Activated T-helper 1 cell treated with anti-CD3 and anti-CD28 coated beads, Interleukin-12 subunit alpha, Interleukin-12 subunit beta, Interleukin-2, Interleukin-4 antibody, amounts not matched to agents 30 ng/mL and 10 ng/mL and 1 ng/mL, durations not matched to agents 14 hours and 24 hours and 36 hours (primary cell): ENCODE measurements at regions of chr11 and their contacts with region 1.

Region 1: DNA sequence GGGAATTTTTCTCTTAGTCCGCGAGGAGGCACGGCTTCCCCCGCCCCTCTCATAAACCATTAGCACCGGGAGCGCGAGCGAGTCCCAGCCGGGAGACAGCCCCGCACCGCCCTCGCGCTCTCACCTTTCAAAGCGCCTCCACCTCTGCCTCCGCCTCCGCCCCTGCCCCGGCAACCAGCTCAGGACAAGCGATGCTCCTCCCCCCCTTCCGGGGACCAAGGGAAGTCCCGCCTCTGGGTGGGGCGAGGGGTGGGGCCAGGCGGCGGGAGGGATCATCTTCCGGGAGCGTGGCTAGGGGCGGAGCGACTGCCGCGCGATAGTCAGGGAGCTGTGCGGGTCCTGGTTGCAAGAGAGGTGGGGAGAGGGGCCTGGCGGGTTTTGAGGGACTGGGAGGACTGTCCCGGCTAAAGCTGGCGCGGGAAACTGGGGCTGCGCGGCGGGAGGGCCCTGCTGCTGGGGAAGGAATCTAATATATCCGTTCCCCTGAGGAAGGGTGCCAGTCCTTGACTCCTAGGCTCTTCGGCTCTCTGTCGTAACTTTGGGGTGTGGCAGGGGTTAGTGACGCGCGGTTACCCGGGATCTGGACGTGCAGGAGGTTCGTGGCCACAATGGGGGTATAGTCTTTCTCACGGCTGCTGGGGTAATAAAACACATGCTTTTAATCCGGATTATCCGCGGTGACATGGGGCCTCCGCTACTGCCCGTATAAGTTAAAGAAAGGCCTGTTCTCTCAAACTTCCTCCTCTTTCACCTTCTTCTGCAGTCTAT is at the starts of genes CCDC82 and JRKL:
- DNase-seq: peak; percentile 97
- H3K4me3 Mint-ChIP-seq: peak within 1 kb of the TSS; percentile 95
- H3K27ac Mint-ChIP-seq: peak within 1 kb of the TSS; percentile 85
- H3K4me1 Mint-ChIP-seq: peaks cover 64% of the 10 kb centered on the region
- H3K27me3 Mint-ChIP-seq: no peaks in the 10 kb centered on the region
- total RNA-seq, gene CCDC82: 28.5 and 29.9 TPM in 2 replicates
- total RNA-seq, gene JRKL: 9.6 and 10.2 TPM in 2 replicates

Region 2: DNA sequence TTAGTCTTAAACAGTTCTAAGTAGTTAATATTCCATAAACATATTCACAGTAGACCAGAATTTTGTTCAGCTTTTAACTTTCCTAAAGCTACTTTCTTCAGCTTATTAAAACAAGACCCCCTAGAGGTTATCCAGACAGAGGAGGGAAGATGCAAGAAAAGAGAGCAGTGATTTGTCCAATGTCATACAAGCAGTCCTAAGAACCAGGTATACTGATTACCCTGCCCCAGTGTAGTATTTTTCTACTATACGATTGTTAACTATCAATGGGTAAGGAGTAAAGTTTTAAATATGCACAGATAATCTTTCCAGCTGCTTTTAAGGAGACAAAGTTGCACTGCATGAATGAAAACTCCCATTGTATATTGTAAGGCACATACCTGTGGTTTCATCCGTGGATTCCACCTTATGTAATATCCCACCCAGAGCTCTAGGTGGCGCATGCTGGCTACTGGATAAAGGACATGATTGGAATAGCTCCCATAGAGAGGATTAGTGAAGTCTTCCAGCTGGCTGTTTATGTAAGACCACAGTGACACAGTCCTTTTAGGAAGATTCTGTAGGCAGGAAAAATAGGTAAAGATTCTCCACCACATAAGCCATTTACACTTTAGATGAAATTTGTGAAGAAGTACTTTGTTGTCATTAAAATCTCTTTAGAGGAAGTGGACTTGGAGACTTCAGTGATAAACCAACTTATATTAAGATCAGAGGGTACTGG is 554.0 kb before region 1 on chr11:
- intact Hi-C with region 1: loop called (anchors 1 kb)
- DNase-seq: peak; percentile 29
- H3K4me3 Mint-ChIP-seq: no peak overlapping the region
- H3K27ac Mint-ChIP-seq: peak overlapping the region; percentile 0
- H3K4me1 Mint-ChIP-seq: no peaks in the 10 kb centered on the region
- H3K27me3 Mint-ChIP-seq: no peaks in the 10 kb centered on the region

Region 3: DNA sequence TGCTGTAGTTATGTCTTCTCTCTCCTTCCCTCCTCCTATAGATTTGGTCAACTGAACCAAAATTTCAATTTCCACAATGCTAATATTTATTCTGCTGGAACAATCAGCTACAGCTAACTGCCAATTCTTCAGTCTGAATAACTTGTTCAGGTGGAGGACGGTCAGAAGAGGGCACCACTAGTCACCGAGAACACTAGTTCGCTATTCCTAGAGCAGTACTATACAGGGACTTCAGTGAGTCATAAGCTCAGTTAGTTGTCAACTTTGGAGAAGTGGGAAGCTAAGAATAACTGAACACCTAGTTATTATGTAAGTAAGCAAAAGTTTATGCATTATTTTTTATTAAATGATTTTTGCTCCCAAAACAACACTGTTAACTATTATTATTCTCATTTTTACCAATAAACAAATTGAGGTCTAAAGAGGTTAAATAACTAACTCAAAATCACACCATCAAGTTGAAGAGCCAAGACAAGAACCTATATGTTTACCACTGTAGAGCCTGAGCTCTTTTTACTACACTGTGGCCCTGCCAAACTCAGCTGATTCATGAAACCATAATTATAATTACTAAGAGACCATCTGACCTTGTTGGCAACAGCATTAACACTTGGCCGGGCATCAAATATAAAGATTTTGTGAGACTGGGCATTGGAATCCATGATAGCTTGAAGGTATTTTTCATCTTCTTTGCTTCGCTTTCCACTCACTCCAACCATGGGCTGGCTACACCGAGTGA is 540.6 kb before region 1 on chr11:
- intact Hi-C with region 1: loop called (anchors 1 kb)
- DNase-seq: no peak
- H3K4me3 Mint-ChIP-seq: no peak overlapping the region
- H3K27ac Mint-ChIP-seq: no peak overlapping the region
- H3K4me1 Mint-ChIP-seq: no peaks in the 10 kb centered on the region
- H3K27me3 Mint-ChIP-seq: no peaks in the 10 kb centered on the region

Region 4: GRCh38 chr11:95923728-95924413 is 466.0 kb before region 1 on chr11 and contains the start of gene MTMR2:
- intact Hi-C with region 1: loop called (anchors 2 kb)
- DNase-seq: peak; percentile 39
- H3K4me3 Mint-ChIP-seq: peak within 1 kb of the TSS; percentile 100
- H3K27ac Mint-ChIP-seq: peak within 1 kb of the TSS; percentile 86
- H3K4me1 Mint-ChIP-seq: peaks cover 31% of the 10 kb centered on the region
- H3K27me3 Mint-ChIP-seq: peaks cover 3% of the 10 kb centered on the region
- total RNA-seq, gene MTMR2: 41.3 and 41.7 TPM in 2 replicates

Region 5: GRCh38 chr11:96054870-96055705 is 334.8 kb before region 1 on chr11:
- intact Hi-C with region 1: loop called (anchors 1 kb)
- DNase-seq: no peak
- H3K4me3 Mint-ChIP-seq: no peak overlapping the region
- H3K27ac Mint-ChIP-seq: no peak overlapping the region
- H3K4me1 Mint-ChIP-seq: peaks cover 60% of the 10 kb centered on the region
- H3K27me3 Mint-ChIP-seq: no peaks in the 10 kb centered on the region